Activated CD8-positive, alpha-beta T cell treated with anti-CD3 and anti-CD28 coated beads, Interleukin-2, amount 10 ng/mL, durations not matched to agents 7 days and 5 days (primary cell): ENCODE measurements at regions of chr17 and their contacts with region 1.

Region 1: GRCh38 chr17:46212634-46213435 is 19.6 kb upstream of the KANSL1 start:
- DNase-seq: peak; percentile 72
- ATAC-seq: peak; percentile 73
- H3K4me3 Mint-ChIP-seq: no peak overlapping the region
- H3K27ac Mint-ChIP-seq: no peak overlapping the region
- H3K4me1 Mint-ChIP-seq: peaks cover 14% of the 10 kb centered on the region
- H3K27me3 Mint-ChIP-seq: no peaks in the 10 kb centered on the region

Region 2: GRCh38 chr17:46002311-46002972 is 210.4 kb before region 1 on chr17:
- CTCF ChIA-PET with region 1: interaction called, 53 read pairs
- POLR2A ChIA-PET with region 1: no interaction called
- DNase-seq: peak; percentile 84
- ATAC-seq: peak; percentile 93
- H3K4me3 Mint-ChIP-seq: no peak overlapping the region
- H3K27ac Mint-ChIP-seq: no peak overlapping the region
- H3K4me1 Mint-ChIP-seq: no peaks in the 10 kb centered on the region
- H3K27me3 Mint-ChIP-seq: peaks cover 5% of the 10 kb centered on the region

Region 3: GRCh38 chr17:46035112-46035818 is 177.6 kb before region 1 on chr17:
- CTCF ChIA-PET with region 1: interaction called, 15 read pairs
- POLR2A ChIA-PET with region 1: no interaction called
- DNase-seq: no peak
- ATAC-seq: peak; percentile 62
- H3K4me3 Mint-ChIP-seq: no peak overlapping the region
- H3K27ac Mint-ChIP-seq: peak overlapping the region; percentile 32
- H3K4me1 Mint-ChIP-seq: peaks cover 8% of the 10 kb centered on the region
- H3K27me3 Mint-ChIP-seq: no peaks in the 10 kb centered on the region

Region 4: DNA sequence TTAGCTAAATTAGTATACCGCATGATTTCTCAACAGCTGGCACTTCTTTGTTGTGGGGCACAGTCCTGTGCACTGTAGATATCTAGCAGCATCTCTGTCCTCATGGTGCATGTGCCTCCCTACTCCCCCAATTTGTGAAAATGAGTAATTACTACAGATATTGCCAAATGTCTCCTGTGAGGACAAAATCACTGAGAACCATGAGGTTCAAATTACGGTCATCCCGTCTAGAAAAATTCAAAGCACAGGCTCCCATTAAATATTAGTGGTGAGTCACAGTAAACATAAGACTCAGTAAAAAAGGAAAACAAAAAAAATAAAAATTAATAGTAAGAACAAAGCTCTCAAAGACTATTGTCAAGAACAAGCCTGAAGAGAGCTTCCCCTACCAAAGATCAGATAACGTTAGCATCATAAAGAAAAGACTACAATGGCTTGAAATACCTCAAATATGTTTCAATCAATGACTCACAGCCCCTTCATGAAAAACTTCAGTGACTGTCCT is 156.0 kb before region 1 on chr17:
- CTCF ChIA-PET with region 1: interaction called, 12 read pairs
- POLR2A ChIA-PET with region 1: no interaction called
- DNase-seq: no peak
- ATAC-seq: no peak
- H3K4me3 Mint-ChIP-seq: no peak overlapping the region
- H3K27ac Mint-ChIP-seq: no peak overlapping the region
- H3K4me1 Mint-ChIP-seq: peaks cover 16% of the 10 kb centered on the region
- H3K27me3 Mint-ChIP-seq: no peaks in the 10 kb centered on the region

Region 5: DNA sequence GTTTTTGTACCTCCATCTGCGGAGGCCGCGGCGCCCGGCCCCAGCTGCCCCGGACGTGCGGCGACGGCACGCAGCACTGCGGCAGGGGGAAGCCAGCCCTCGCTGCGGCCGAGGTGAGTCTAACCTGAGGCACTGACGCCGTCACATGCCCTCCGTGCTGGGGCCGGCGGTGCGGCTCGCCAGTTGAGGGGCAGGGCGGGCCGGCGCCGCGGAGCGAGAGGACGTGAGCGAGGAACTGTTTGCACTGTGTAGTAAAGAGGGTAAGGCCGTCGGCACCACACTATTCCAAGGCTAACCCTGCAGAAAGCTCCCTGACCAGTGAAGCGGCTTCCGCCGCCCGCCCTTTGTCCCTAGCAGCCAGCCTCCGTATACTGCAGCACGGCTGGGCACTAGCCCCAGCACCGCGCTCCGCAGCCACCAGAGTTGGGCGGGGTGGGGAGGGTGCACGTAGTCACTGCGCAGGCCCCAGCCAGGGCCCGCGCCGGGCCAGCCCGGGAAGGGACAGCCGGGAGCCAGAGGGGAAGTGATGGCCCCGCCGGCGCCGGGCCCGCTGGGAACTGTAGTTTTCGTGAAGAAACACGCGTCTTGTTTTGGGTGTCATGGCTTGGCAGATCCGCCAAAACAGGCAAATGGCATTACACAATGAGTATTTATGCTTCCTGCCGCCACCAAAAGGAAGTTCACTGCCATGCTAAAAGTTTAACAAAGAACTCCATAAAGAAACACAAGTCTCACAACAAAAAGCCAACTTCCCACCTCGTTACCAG is 19.0 kb before region 1 on chr17:
- CTCF ChIA-PET with region 1: interaction called, 35 read pairs
- POLR2A ChIA-PET with region 1: interaction called, 17 read pairs
- DNase-seq: peak; percentile 95
- ATAC-seq: peak; percentile 85
- H3K4me3 Mint-ChIP-seq: peak overlapping the region; percentile 84
- H3K27ac Mint-ChIP-seq: peak overlapping the region; percentile 99
- H3K4me1 Mint-ChIP-seq: peaks cover 62% of the 10 kb centered on the region
- H3K27me3 Mint-ChIP-seq: no peaks in the 10 kb centered on the region

Region 6: DNA sequence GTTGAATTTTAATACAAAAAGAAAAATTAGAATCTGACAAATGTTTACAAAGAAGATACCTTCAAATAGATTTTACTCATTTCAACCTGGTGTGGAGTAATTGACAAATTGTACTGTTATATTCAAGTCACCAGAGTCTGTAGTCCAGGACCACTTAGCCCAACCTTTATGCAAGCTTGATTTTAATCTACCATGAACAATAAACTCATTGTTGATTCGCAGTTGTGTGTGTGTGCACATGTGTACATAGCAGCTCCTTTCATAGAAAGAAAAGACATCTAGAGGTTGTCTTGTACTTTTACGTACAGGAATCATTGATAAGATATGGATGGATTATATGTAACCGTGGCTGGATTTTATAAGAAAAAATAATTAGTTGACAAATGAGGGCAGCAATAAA is 61.4 kb after region 1 on chr17:
- CTCF ChIA-PET with region 1: no interaction called
- POLR2A ChIA-PET with region 1: no interaction called
- DNase-seq: no peak
- ATAC-seq: no peak
- H3K4me3 Mint-ChIP-seq: no peak overlapping the region
- H3K27ac Mint-ChIP-seq: no peak overlapping the region
- H3K4me1 Mint-ChIP-seq: no peaks in the 10 kb centered on the region
- H3K27me3 Mint-ChIP-seq: peaks cover 4% of the 10 kb centered on the region